ENCODE measurements at regions of chr5 and their contacts with region 1.

Region 1: GRCh38 chr5:180784497-180785097 is 18.0 kb downstream of the MGAT1 start:
- DNase-seq: no peak
- H3K4me3 ChIP-seq: no peak overlapping the region
- H3K27ac ChIP-seq: peak overlapping the region in 2 of 4 donors; percentile 83 to 89
- H3K4me1 ChIP-seq: peaks cover 17 to 61% (median 31%) of the 10 kb centered on the region in 3 donors
- H3K27me3 ChIP-seq: no peaks in the 10 kb centered on the region
- CTCF ChIP-seq: peak; percentile 56 to 86 (median 69)
- POLR2A ChIP-seq: no peak

Region 2: DNA sequence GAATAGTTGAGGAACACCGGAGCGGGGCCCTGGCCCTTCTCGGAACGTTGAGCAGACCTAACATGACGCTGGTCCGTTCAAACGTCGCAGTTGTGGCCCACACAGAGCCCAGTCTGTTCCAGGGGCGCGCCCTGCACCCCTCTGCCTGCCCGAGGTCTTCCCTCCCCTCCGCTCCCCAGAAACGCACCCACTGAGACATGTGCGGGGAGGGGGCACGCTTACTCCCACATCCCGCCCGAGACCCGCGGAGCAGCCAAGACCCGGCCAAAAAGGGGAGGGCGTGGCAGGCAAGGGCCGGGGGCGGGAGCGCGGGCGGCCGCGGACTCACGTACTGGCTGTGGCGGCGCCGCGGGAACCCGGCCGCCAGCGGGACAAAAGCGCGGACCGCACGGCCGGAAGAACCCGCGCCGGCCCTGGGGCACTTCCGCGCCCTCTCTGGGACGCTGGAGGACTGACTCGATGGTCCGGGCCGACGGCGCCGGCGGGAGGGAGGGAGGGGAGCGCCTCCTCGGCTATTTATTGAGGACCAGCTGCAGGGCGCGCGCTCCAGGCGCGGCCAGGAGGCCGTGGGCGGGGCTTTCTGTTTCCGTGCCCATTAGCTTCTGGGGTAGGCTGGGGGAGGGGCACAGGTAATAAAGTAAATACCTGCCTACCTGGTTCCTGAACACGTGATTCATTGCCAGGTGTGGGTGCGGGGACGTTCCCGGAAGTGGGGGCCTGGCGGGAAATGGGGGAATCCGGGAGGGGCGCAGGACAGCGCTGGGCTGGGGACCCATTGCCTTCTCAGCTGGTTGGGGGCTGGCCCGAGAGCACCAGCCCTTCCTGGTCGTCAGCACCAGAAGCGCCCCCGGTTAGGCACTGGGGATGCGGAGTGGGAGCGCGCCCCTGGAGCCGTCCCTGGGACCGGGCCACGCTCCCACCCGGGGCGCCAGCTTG is 76.6 kb after region 1 on chr5 and contains the start of gene ZFP62:
- intact Hi-C with region 1: loop called (anchors 5 kb)
- DNase-seq: peak; percentile 61
- H3K4me3 ChIP-seq: peak within 1 kb of the TSS; percentile 85 to 96 (median 95)
- H3K27ac ChIP-seq: peak within 1 kb of the TSS; percentile 94 to 97 (median 96)
- H3K4me1 ChIP-seq: peaks cover 0 to 28% (median 11%) of the 10 kb centered on the region in 3 donors
- H3K27me3 ChIP-seq: no peaks in the 10 kb centered on the region
- CTCF ChIP-seq: peak in 1 of 6 experiments; percentile 7
- POLR2A ChIP-seq: peak in 2 of 4 donors; percentile 62 to 81
- total RNA-seq, gene ZFP62: 8.9 to 32.6 (median 19.2) TPM

Region 3: GRCh38 chr5:181159286-181159829 is 374.8 kb after region 1 on chr5:
- intact Hi-C with region 1: loop called (anchors 10 kb)
- DNase-seq: peak; percentile 31
- H3K4me3 ChIP-seq: no peak overlapping the region
- H3K27ac ChIP-seq: peak overlapping the region in 1 of 4 donors; percentile 91
- H3K4me1 ChIP-seq: peaks cover 0 to 22% (median 8%) of the 10 kb centered on the region in 3 donors
- H3K27me3 ChIP-seq: peaks cover 0 to 37% (median under 1%) of the 10 kb centered on the region in 4 donors
- CTCF ChIP-seq: peak; percentile 74 to 90 (median 86)
- POLR2A ChIP-seq: no peak